ENCODE measurements at regions of chr20 and their contacts with region 1.

Region 1: DNA sequence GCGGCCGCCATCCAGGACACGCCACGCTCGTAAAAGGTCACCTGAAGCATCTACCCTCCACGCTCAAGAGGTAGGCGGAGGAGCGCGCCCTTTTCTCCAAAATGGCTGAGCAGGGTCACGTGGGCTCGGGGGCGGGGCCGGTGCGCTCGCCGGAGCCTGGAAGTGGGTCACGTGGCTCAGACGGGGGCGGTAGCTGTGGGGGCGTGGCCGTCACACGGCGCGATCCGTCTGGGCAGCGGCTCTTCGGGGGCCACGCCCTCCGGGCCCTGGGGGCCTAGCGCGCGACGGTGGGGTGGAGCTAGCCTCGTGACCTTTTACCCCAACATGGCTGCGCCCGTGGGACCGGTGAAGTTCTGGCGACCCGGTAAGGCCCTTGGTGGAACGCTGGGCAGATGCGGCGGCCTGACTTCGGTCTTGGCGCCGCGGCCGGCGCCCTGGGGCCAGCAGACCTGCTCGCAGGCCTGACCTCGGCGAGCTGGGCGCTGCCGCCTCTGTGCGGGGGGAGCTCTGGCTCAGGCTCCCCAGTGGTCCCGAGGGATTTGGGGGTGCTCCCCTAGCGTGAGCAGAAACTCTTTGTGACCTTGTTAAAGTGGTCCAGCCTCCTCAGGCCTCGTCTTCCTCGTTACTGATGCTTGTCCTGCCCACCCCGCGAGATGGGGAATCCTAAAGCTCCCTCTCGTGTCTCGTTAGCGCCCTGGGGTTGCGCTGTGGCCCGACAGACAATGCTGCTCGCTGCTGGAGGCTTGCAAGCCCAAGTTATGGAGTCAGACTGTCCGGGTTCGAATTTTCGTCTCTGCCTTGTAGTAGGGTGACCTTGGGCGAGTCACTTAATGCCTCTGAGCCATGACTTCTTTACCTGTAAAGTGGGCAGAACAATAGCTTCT is at the start of gene DHX35:
- DNase-seq: peak; percentile 100
- H3K4me3 ChIP-seq: peak within 1 kb of the TSS; percentile 93 to 100
- H3K27ac ChIP-seq: peak within 1 kb of the TSS; percentile 89 to 93
- H3K4me1 ChIP-seq: peaks cover 7 to 9% of the 10 kb centered on the region in 2 experiments; a peak in 3 of 4 replicates
- H3K27me3 ChIP-seq: no peaks in the 10 kb centered on the region
- CTCF ChIP-seq: peak; percentile 42; the same call in 1 of the 2 replicates
- EP300 ChIP-seq: no peak
- RAD21 ChIP-seq: peak; percentile 56
- polyA plus RNA-seq, gene DHX35: 17.1 and 28.5 TPM in 2 replicates

Region 2: GRCh38 chr20:38926142-38926933 is 35.9 kb before region 1 on chr20 and contains the start of gene FAM83D:
- CTCF ChIA-PET with region 1: interaction called, 20 read pairs
- POLR2A ChIA-PET with region 1: interaction called, 20 read pairs
- DNase-seq: peak; percentile 99
- H3K4me3 ChIP-seq: peak within 1 kb of the TSS; percentile 81 to 91
- H3K27ac ChIP-seq: peak within 1 kb of the TSS; percentile 37 to 54
- H3K4me1 ChIP-seq: peaks cover 0 to 14% of the 10 kb centered on the region in 2 experiments; a peak in 2 of 4 replicates
- H3K27me3 ChIP-seq: peaks cover 6% of the 10 kb centered on the region; the same call in 1 of the 2 replicates
- CTCF ChIP-seq: no peak
- EP300 ChIP-seq: 0 out of 4 replicates have a peak, but pooled peaks of 1 of the 2 experiments have one; percentile 7
- RAD21 ChIP-seq: peak; percentile 70; the same call in 1 of the 2 replicates
- polyA plus RNA-seq, gene FAM83D: 18.9 and 21.5 TPM in 2 replicates

Measured in SK-N-SH (cell line).